Activated naive CD4-positive, alpha-beta T cell treated with anti-CD3 and anti-CD28 coated beads for 36 hours (primary cell): ENCODE measurements at regions of chr14 and their contacts with region 1.

Region 1: DNA sequence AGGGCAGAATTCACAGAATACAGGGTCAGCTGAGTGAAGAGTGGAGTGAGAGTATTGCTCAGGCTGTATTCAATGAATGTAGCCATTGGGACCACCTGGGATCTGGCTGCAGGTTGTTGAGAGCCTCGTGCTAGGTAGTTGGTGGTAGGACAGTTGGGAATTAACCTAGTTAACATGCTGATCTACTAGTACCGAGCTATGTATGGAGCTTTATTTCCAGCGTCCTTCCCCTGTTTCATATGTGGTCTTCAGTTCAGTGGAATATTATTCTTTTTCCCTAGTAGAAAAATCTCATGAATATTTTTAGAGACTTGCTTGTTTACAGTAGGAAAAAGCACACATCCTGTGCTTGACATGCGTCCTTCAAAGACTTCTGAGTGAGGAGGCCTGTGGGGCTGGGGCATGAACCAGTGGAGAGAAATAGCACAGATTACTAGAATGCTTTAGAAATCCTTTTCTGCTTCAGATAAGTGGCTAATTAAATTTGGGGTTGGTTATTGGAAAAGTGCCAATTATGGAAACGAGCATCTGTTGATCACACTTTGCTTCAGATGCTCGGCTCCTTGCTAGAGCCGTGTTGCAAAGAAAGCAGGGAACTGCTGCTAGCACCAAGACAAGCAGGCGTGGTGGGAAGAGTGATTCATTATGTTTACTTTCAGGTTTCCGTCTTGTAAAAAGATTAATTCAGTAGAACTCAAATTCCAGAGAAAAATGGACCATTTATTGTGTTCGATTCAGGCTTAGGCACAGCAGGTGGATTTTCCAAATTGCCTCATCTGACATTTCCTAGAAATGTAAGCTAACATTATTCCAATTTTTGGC is 53.6 kb downstream of the ARF6 start:
- DNase-seq: peak; percentile 51
- H3K4me3 Mint-ChIP-seq: peak overlapping the region; percentile 44
- H3K27ac Mint-ChIP-seq: peak overlapping the region; percentile 62
- H3K4me1 Mint-ChIP-seq: peaks cover 64% of the 10 kb centered on the region
- H3K27me3 Mint-ChIP-seq: no peaks in the 10 kb centered on the region

Region 2: GRCh38 chr14:49581209-49582112 is 365.1 kb before region 1 on chr14:
- CTCF ChIA-PET with region 1: no interaction called
- intact Hi-C with region 1: no loop called
- DNase-seq: no peak
- H3K4me3 Mint-ChIP-seq: no peak overlapping the region
- H3K27ac Mint-ChIP-seq: peak overlapping the region; percentile 54
- H3K4me1 Mint-ChIP-seq: peaks cover 61% of the 10 kb centered on the region
- H3K27me3 Mint-ChIP-seq: peaks cover 3% of the 10 kb centered on the region

Region 3: GRCh38 chr14:49908432-49908781 is 38.1 kb before region 1 on chr14:
- CTCF ChIA-PET with region 1: no interaction called
- intact Hi-C with region 1: loop called (anchors 2 kb)
- DNase-seq: no peak
- H3K4me3 Mint-ChIP-seq: no peak overlapping the region
- H3K27ac Mint-ChIP-seq: no peak overlapping the region
- H3K4me1 Mint-ChIP-seq: peaks cover 40% of the 10 kb centered on the region
- H3K27me3 Mint-ChIP-seq: no peaks in the 10 kb centered on the region

Region 4: GRCh38 chr14:49962621-49963020 is 16.1 kb after region 1 on chr14:
- CTCF ChIA-PET with region 1: interaction called, 3 read pairs
- intact Hi-C with region 1: loop called (anchors 1 kb)
- DNase-seq: peak; percentile 85
- H3K4me3 Mint-ChIP-seq: no peak overlapping the region
- H3K27ac Mint-ChIP-seq: peak overlapping the region; percentile 66
- H3K4me1 Mint-ChIP-seq: peaks cover 42% of the 10 kb centered on the region
- H3K27me3 Mint-ChIP-seq: no peaks in the 10 kb centered on the region